ENCODE measurements at regions of chr4 and their contacts with region 1.

Region 1: DNA sequence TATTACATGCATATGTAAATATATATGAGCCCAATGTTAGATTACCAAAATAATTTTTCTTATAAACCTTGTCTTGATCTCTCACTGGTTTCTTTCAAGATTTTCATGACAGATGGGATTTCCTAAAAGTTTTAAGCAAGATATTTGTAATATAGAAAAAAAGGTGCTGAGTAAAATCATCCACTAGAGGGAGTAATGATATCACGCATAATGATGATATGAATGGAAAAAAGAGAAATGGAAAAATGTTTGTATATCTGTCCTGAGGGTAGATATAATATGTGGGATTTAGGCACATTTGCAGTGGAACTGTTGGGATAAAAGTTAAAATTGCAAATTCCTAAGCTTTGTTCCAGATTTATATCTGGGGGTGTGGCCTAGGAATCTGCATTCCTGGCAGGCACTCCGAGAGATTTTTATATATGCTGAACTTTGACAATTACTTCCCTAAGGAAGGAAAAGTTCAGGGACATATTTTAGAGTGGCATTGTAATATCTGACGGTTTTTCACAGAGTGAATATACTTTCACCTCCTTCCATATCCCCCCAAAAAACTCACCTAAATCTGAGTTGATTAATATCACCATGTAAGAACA is 60.5 kb downstream of the TMA16 start:
- DNase-seq: no peak
- H3K4me3 ChIP-seq: no peak overlapping the region
- CTCF ChIP-seq: no peak
- POLR2A ChIP-seq: no peak

Region 2: DNA sequence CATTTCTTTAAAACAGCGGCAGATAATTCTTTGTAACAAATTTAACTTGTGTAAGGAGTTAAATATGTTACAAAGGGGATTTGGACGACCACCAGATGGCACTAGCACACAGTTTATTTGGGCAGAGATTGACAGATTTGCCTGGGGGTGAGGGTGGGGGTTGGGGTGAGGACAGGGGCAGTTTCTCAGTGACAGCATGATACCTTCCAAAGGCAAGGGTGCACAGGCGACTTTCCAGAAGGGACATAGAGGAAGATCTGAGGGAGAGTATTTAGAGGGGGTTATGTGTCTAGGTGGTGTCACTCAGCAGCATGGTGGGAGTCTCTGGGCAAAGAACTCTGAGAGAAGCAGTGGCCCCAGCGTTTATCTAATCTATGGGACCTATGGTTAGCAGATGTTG is 70.1 kb before region 1 on chr4:
- intact Hi-C with region 1: no loop called
- DNase-seq: no peak
- H3K4me3 ChIP-seq: no peak overlapping the region
- CTCF ChIP-seq: no peak
- POLR2A ChIP-seq: no peak

Region 3: GRCh38 chr4:164748375-164748774 is 1193.4 kb after region 1 on chr4:
- intact Hi-C with region 1: loop called (anchors 10 kb)
- DNase-seq: no peak
- H3K4me3 ChIP-seq: no peak overlapping the region
- CTCF ChIP-seq: no peak
- POLR2A ChIP-seq: no peak

Measured in lower leg skin (tissue), 4 donors.